Testis (tissue), 5 donors: ENCODE measurements at regions of chr5 and their contacts with region 1.

Region 1: GRCh38 chr5:138850865-138851435 is 24.2 kb downstream of the LRRTM2 start:
- DNase-seq: no peak
- H3K4me3 ChIP-seq: no peak overlapping the region
- H3K27ac ChIP-seq: no peak overlapping the region
- H3K4me1 ChIP-seq: no peaks in the 10 kb centered on the region
- H3K27me3 ChIP-seq: no peaks in the 10 kb centered on the region
- CTCF ChIP-seq: no peak
- POLR2A ChIP-seq: no peak

Region 2: GRCh38 chr5:138772986-138773594 is 77.9 kb before region 1 on chr5:
- intact Hi-C with region 1: no loop called
- DNase-seq: no peak
- H3K4me3 ChIP-seq: no peak overlapping the region
- H3K27ac ChIP-seq: no peak overlapping the region
- H3K4me1 ChIP-seq: peaks cover 4% of the 10 kb centered on the region
- H3K27me3 ChIP-seq: no peaks in the 10 kb centered on the region
- CTCF ChIP-seq: no peak
- POLR2A ChIP-seq: no peak

Region 3: GRCh38 chr5:138927979-138928378 is 77.0 kb after region 1 on chr5:
- intact Hi-C with region 1: loop called (anchors 10 kb)
- DNase-seq: peak; percentile 95
- H3K4me3 ChIP-seq: no peak overlapping the region
- H3K27ac ChIP-seq: peak overlapping the region; percentile 62 to 72
- H3K4me1 ChIP-seq: peaks cover 21% of the 10 kb centered on the region
- H3K27me3 ChIP-seq: no peaks in the 10 kb centered on the region
- CTCF ChIP-seq: no peak
- POLR2A ChIP-seq: no peak